PC-9 (cell line): ENCODE measurements at regions of chr3 and their contacts with region 1.

Region 1: DNA sequence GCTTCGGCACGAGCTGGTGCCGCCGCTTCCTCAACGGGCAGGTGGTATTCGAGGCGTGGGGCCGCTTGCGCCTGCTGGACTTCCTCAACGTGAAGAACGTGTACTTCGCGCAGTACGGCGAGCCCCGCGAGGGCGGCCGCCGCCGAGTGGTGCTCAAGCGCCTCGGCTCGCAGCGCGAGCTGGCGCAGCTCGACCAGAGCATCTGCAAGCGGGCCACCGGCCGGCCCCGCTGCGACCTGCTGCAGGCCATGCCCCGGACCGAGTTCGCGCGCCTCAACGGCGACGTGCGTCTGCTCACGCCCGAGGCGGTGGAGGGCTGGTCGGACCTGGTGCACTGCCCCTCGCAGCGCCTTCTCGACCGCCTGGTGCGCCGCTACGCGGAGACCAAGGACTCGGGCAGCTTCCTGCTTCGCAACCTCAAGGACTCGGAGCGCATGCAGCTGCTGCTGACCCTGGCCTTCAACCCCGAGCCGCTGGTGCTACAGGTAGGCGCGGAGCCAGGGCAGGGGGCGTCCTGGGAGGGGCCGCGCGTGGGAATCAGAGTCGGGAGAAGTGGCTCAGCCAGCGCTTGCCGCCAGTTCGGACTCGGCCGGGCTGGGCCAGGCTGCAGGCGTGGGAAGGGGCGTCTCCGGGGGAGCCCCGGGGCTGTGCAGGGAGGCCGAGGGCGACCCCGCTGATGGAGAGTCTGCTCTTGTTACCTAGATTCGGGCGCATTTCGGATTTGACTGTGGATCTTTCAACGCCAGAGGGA is 1.1 kb downstream of the DIPK2A start:
- DNase-seq: peak; percentile 65 to 70
- H3K4me3 ChIP-seq: peak overlapping the region; percentile 90
- H3K27ac ChIP-seq: peak overlapping the region; percentile 70
- H3K4me1 ChIP-seq: peaks cover 37% of the 10 kb centered on the region
- H3K27me3 ChIP-seq: no peaks in the 10 kb centered on the region
- CTCF ChIP-seq: peak; percentile 43; the same call in 1 of the 2 replicates

Region 2: GRCh38 chr3:143775459-143775858 is 197.2 kb before region 1 on chr3:
- CTCF ChIA-PET with region 1: no interaction called
- POLR2A ChIA-PET with region 1: interaction called, 3 read pairs
- intact Hi-C with region 1: loop called (anchors 1 kb)
- DNase-seq: no peak
- H3K4me3 ChIP-seq: no peak overlapping the region
- H3K27ac ChIP-seq: no peak overlapping the region
- H3K4me1 ChIP-seq: no peaks in the 10 kb centered on the region
- H3K27me3 ChIP-seq: no peaks in the 10 kb centered on the region
- CTCF ChIP-seq: peak; percentile 72

Region 3: DNA sequence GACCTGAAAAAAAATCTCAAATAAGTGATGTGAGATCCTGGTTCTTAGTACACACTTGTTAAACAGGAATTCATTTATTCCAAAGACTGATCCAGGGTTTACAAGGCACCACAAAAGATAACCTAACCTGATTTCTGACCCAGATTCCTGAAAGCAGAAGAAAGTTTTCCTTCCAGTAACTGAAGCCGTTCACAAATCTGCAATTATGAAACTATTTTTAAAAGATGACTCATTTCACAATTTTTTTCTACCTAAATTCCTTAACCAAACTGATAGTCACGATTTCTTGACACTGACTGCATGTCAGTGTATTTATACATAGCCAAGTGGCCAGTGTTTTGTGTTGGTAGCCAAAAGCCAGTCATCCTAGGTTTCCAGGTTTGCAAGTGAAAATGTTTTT is 141.5 kb before region 1 on chr3:
- CTCF ChIA-PET with region 1: no interaction called
- POLR2A ChIA-PET with region 1: no interaction called
- intact Hi-C with region 1: loop called (anchors 1 kb)
- DNase-seq: peak; percentile 14 to 63
- H3K4me3 ChIP-seq: no peak overlapping the region; the same call in 1 of the 2 replicates
- H3K27ac ChIP-seq: peak overlapping the region; percentile 67
- H3K4me1 ChIP-seq: peaks cover 35% of the 10 kb centered on the region
- H3K27me3 ChIP-seq: no peaks in the 10 kb centered on the region
- CTCF ChIP-seq: no peak

Region 4: GRCh38 chr3:144770915-144771351 is 798.3 kb after region 1 on chr3:
- CTCF ChIA-PET with region 1: no interaction called
- POLR2A ChIA-PET with region 1: no interaction called
- intact Hi-C with region 1: loop called (anchors 1 kb)
- DNase-seq: no peak
- H3K4me3 ChIP-seq: no peak overlapping the region
- H3K27ac ChIP-seq: no peak overlapping the region
- H3K4me1 ChIP-seq: no peaks in the 10 kb centered on the region
- H3K27me3 ChIP-seq: no peaks in the 10 kb centered on the region
- CTCF ChIP-seq: peak; percentile 60

Region 5: DNA sequence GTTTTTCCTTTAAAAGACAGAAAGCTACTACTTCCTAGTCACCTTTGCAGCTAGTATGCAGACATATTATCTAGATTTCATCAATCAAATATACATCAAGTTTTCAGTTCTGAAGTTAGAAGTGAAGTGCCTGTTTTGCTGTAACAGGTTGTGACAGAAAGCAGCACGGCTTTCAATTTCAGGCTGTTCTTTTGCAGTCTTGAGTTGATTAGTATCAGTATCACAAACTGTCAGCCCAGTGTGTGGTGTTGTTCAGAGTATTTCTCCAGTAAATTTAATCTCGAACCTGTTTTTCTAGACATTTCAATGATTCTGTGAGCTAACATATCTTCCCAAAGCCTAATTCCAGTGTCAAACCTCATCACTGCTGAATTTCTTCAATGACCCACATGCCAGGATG is 1049.8 kb after region 1 on chr3:
- CTCF ChIA-PET with region 1: no interaction called
- POLR2A ChIA-PET with region 1: interaction called, 12 read pairs
- intact Hi-C with region 1: no loop called
- DNase-seq: no peak
- H3K4me3 ChIP-seq: no peak overlapping the region
- H3K27ac ChIP-seq: no peak overlapping the region
- H3K4me1 ChIP-seq: no peaks in the 10 kb centered on the region
- H3K27me3 ChIP-seq: no peaks in the 10 kb centered on the region
- CTCF ChIP-seq: no peak

Region 6: GRCh38 chr3:145259166-145259880 is 1286.6 kb after region 1 on chr3:
- CTCF ChIA-PET with region 1: no interaction called
- POLR2A ChIA-PET with region 1: no interaction called
- intact Hi-C with region 1: loop called (anchors 2 kb)
- DNase-seq: no peak
- H3K4me3 ChIP-seq: no peak overlapping the region
- H3K27ac ChIP-seq: no peak overlapping the region
- H3K4me1 ChIP-seq: no peaks in the 10 kb centered on the region
- H3K27me3 ChIP-seq: no peaks in the 10 kb centered on the region
- CTCF ChIP-seq: no peak

Region 7: GRCh38 chr3:145865399-145866018 is 1892.8 kb after region 1 on chr3:
- CTCF ChIA-PET with region 1: no interaction called
- POLR2A ChIA-PET with region 1: interaction called, 14 read pairs
- intact Hi-C with region 1: no loop called
- DNase-seq: no peak
- H3K4me3 ChIP-seq: no peak overlapping the region
- H3K27ac ChIP-seq: no peak overlapping the region
- H3K4me1 ChIP-seq: no peaks in the 10 kb centered on the region
- H3K27me3 ChIP-seq: no peaks in the 10 kb centered on the region
- CTCF ChIP-seq: no peak